Activated CD8-positive, alpha-beta memory T cell treated with anti-CD3 and anti-CD28 coated beads, Interleukin-2, amount 10 ng/mL, durations not matched to agents 7 days and 5 days (primary cell): ENCODE measurements at regions of chr4 and their contacts with region 1.

Region 1: GRCh38 chr4:54233277-54233696 is 4.2 kb downstream of the PDGFRA start:
- DNase-seq: peak; percentile 77
- ATAC-seq: peak; percentile 90
- H3K4me3 Mint-ChIP-seq: peak overlapping the region; percentile 18
- H3K27ac Mint-ChIP-seq: no peak overlapping the region
- H3K4me1 Mint-ChIP-seq: peaks cover 16% of the 10 kb centered on the region
- H3K27me3 Mint-ChIP-seq: peaks cover 70% of the 10 kb centered on the region

Region 2: DNA sequence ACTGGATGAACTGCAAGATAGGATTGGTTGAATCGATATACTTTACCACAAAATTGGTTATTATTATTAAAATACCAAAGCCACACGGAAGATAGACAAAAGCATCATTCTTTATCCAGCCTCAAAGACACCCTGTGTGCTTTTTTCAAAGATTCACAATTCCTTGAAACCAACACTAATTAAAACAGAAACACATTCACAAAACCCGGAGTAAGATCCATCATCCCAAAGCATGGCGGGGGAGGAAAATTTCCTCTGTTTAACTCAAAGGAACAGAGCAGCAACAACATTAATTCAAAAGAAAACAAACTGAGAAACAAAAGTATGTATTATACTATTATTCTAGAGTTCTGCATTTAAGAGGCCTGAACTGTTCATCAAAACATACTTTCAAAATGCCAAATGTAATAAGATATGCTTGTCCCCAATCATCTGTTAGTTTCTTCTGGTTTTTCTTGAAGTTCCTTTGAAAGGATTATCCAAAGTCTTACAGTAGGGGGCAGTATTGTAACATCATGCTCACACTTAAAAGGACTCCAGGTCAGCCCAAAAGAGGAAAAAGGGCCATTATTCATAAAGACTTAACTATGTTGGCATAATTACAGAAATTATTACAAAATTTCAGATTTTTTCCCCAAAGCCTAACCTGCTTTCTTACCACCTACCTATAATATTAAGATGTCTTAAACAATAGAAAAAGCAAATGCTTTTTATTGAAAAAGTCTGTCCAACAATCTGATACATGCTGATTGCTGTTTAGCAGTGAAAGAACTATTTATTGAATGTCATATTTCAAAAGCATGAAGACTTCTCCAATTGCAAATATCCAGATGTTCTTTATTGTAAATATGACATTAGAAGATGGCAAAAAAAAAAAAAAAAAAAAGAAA is 1036.2 kb before region 1 on chr4:
- CTCF ChIA-PET with region 1: interaction called, 11 read pairs
- DNase-seq: no peak
- ATAC-seq: peak; percentile 47
- H3K4me3 Mint-ChIP-seq: no peak overlapping the region
- H3K27ac Mint-ChIP-seq: no peak overlapping the region
- H3K4me1 Mint-ChIP-seq: peaks cover 3% of the 10 kb centered on the region
- H3K27me3 Mint-ChIP-seq: no peaks in the 10 kb centered on the region

Region 3: GRCh38 chr4:53908661-53909078 is 324.6 kb before region 1 on chr4:
- CTCF ChIA-PET with region 1: interaction called, 74 read pairs
- DNase-seq: no peak
- ATAC-seq: peak; percentile 55
- H3K4me3 Mint-ChIP-seq: no peak overlapping the region
- H3K27ac Mint-ChIP-seq: no peak overlapping the region
- H3K4me1 Mint-ChIP-seq: peaks cover 11% of the 10 kb centered on the region
- H3K27me3 Mint-ChIP-seq: peaks cover 61% of the 10 kb centered on the region

Region 4: DNA sequence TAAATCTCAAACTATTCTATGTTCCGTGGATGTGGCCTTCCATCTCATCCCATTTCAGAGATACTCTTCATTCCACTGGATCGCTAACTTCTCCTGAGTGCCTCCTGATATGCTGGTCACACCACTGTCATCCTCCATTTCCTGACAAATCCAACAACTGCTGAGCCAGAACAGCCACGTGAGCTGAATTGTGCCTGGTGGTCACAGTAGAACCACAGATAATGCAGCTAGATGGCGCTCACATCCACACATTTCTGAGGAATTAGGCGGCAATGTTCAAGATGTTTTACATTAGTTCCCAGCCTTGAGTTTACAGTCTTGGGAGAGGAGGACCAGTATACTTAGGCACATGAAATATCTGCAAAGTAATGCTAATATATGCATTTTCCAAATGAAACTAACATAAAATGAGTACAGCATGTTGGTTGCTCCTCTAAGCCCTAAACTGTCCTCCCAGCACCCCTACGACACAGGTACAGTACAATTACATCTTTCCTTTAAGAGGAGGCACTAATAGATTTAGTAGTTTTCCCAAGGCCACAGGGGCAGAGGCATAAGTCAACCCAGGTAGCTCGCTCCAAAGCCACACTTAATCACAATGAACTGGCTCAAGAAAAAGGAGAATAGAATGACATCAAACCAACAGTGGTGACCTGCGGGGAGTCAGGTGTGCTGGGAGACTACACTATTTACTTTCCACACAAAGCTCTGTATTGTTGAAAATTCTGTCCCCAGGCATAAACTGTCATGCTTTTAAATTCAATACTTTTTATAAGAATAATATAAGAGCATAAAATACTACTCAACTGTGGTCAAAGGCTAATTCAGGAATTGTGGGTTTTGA is 303.1 kb before region 1 on chr4:
- CTCF ChIA-PET with region 1: interaction called, 68 read pairs
- DNase-seq: peak; percentile 66
- ATAC-seq: peak; percentile 66
- H3K4me3 Mint-ChIP-seq: no peak overlapping the region
- H3K27ac Mint-ChIP-seq: no peak overlapping the region
- H3K4me1 Mint-ChIP-seq: no peaks in the 10 kb centered on the region
- H3K27me3 Mint-ChIP-seq: peaks cover 5% of the 10 kb centered on the region

Region 5: DNA sequence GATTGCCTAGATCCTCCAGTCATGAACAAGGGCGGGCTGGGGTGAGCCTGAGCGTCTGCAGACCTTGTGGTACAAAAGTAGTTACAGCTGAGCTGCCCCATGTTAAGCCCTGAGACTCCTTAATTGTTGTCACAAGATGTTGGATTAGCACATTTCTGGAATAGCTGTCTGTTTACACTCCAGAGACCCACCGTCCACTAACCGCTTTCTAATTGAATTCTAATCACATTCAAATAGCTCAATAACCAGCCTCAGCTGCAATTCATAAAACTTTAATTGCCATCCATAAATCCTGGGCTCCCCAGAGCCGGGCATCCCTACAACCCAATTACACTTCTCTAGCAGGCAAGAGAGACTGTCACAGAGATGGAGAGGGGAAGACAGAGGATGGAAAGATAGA is 134.9 kb before region 1 on chr4:
- CTCF ChIA-PET with region 1: interaction called, 12 read pairs
- DNase-seq: no peak
- ATAC-seq: no peak
- H3K4me3 Mint-ChIP-seq: no peak overlapping the region
- H3K27ac Mint-ChIP-seq: no peak overlapping the region
- H3K4me1 Mint-ChIP-seq: peaks cover 31% of the 10 kb centered on the region
- H3K27me3 Mint-ChIP-seq: peaks cover 94% of the 10 kb centered on the region

Region 6: DNA sequence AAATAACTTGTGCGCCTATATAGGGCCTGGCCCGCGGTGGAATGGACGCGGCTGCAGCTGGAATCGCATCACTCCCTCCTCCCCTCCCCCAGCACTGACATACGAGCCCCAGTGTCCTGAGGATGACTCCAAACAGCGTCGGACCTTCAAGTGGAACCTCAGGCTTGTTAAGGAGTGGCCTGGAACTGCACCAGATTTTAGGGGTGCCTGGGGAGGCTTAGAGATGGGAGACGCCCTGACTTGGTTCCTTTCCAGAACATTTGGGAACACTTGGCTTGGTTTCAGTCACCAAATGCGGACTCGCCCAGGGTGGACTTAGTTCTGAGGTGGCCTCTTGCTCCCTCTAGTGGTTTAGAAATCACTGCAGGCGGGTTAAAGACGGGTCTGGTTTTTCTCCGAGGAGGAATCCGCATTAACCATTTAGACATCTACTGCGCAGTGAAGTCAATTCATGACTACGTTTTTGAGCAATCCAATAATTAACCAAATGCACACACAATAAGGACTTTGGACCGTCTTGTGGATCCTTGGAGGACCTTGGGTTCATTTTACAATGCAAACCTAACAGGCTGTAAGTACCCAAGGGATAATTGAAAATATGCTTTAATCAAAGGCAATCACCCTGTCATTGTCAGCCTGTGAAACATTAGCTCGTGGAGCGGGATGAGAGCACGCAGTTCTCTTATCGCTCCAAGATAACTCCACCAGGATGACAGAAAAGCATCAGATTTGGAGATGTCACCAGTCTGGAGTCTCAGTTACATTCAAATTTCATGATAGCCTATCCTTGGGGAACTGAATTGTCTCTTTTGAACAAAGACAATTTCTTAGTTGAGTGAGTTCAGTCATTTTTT is 15.4 kb before region 1 on chr4:
- CTCF ChIA-PET with region 1: interaction called, 10 read pairs
- DNase-seq: peak; percentile 61
- ATAC-seq: peak; percentile 78
- H3K4me3 Mint-ChIP-seq: no peak overlapping the region
- H3K27ac Mint-ChIP-seq: no peak overlapping the region
- H3K4me1 Mint-ChIP-seq: peaks cover 4% of the 10 kb centered on the region
- H3K27me3 Mint-ChIP-seq: peaks cover 39% of the 10 kb centered on the region

Region 7: DNA sequence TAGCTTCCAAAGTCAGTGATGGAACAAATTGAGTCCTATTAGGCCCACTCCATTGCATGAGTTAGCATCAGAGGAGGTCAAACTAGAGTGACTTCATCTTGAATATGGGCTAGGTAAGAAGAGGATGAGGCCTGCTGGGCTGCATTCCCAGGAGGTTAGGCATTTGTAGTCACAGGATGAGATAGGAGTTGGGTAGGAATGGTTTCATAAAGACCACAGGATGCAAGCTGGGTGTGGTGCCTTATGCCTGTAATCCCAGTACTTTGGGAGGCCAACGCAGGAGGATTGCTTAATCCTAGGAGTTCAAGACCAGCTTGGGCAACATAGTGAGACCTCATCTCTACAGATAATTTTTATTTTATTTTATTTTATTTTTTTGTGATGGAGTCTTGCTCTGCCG is 22.6 kb after region 1 on chr4:
- CTCF ChIA-PET with region 1: interaction called, 10 read pairs
- DNase-seq: no peak
- ATAC-seq: no peak
- H3K4me3 Mint-ChIP-seq: no peak overlapping the region
- H3K27ac Mint-ChIP-seq: no peak overlapping the region
- H3K4me1 Mint-ChIP-seq: no peaks in the 10 kb centered on the region
- H3K27me3 Mint-ChIP-seq: peaks cover 2% of the 10 kb centered on the region